Naive thymus-derived CD8-positive, alpha-beta T cell (primary cell): ENCODE measurements at regions of chr10 and their contacts with region 1.

Region 1: DNA sequence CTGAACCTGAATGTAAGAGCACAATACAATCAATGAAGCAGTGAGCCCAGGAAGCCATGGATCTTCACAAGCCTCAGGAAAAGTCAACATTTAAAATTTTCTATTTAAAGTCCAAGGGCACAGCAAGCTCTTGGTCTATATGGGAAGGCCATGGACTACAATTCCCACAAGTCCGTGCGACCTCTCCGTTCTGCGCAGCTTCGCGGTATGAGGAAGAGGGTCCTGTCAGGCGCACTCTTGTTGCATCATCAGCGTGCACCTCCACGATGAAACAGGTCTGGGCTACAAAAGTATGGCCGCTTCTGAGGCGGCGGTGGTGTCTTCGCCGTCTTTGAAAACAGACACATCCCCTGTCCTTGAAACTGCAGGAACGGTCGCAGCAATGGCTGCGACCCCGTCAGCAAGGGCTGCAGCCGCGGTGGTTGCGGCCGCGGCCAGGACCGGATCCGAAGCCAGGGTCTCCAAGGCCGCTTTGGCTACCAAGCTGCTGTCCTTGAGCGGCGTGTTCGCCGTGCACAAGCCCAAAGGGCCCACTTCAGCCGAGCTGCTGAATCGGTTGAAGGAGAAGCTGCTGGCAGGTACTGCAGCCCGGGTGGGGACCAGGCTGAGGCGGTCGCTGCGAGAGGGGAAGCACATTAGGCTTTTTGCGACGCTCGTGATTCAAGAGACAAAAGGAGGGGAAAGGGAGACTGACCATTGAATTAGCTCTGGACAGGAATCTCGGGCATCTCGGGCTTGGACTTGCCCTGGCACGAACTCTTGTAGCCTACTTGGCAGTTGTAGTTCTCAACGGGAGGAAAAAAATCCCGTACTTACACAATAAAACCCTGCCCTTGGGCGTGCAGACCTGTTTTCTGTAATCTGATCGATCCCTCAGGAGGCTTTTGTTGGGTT is at the start of gene TRUB1:
- DNase-seq: peak; percentile 69 to 95 (median 88)
- ATAC-seq: peak; percentile 99 to 100
- H3K4me3 Mint-ChIP-seq: peak within 1 kb of the TSS; percentile 90 to 97 (median 95)
- H3K27ac Mint-ChIP-seq: peak within 1 kb of the TSS; percentile 94 to 99 (median 98)
- H3K4me1 Mint-ChIP-seq: peaks cover 10 to 42% (median 31%) of the 10 kb centered on the region in 4 donors
- H3K27me3 Mint-ChIP-seq: no peaks in the 10 kb centered on the region
- polyA plus RNA-seq, gene TRUB1: 9.2 to 11.5 (median 9.7) TPM

Region 2: DNA sequence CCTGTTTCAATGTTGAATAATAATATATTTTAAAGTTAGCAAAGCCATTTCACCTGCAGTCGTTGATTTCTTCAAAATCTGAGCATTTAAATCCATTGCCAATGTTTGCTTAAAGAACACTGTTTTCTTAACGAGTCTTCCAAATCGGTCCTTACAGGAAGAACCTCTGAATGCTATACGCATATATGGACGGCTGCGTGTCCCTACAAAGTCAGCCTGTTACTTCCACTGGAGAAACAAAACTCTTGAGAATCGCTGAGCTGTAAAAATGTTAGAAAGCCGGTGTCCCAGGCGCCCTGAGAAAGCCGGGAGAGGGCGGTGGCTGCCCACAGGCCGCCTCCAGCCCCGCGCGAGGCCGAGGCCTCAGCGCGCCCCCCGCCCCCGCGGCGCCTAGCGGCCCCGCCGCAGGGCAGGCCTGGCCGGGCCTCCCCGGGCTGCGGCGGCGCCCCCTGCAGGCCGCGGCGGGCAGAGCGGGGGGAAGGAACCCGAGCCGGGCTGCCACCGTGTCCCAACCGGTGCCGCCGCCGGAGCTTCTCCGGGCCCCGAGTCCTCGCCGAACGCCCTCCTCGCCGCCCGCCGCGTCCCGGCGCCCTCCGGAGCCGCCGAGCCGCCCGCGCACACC is 116.8 kb before region 1 on chr10 and contains the start of gene FHIP2A:
- POLR2A ChIA-PET with region 1: interaction called, 10 read pairs
- DNase-seq: peak; percentile 72 to 90 (median 87)
- ATAC-seq: peak; percentile 90 to 91
- H3K4me3 Mint-ChIP-seq: peak within 1 kb of the TSS; percentile 89 to 96 (median 92)
- H3K27ac Mint-ChIP-seq: peak within 1 kb of the TSS; percentile 90 to 98 (median 95)
- H3K4me1 Mint-ChIP-seq: peaks cover 15 to 36% (median 35%) of the 10 kb centered on the region in 4 donors
- H3K27me3 Mint-ChIP-seq: peaks cover 0 to 7% (median 2%) of the 10 kb centered on the region in 5 donors
- polyA plus RNA-seq, gene FHIP2A: 4.9 to 7.6 (median 6.5) TPM

Region 3: DNA sequence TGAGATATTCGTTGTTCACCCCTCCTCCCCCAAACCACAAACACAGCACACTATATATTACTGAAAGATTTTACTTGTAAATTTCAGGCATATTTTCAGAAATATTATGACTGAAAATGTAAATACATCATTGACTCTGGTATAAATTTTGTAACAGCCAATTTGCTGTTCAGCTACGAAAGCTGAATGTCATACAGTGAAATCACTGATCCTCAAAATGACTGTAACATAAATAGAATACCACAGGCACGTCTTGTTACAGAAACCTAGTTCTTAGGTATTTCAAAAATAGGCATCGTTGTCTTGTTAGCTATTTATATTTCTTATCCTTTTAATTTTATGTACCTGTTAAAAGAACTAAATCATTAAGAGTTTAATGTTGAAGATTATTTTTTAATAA is 14.8 kb after region 1 on chr10:
- POLR2A ChIA-PET with region 1: no interaction called
- DNase-seq: no peak
- ATAC-seq: no peak
- H3K4me3 Mint-ChIP-seq: no peak overlapping the region
- H3K27ac Mint-ChIP-seq: no peak overlapping the region
- H3K4me1 Mint-ChIP-seq: peaks cover 24 to 57% (median 32%) of the 10 kb centered on the region in 4 donors
- H3K27me3 Mint-ChIP-seq: no peaks in the 10 kb centered on the region